GM13977 (cell line): ENCODE measurements at regions of chr3 and their contacts with region 1.

Region 1: DNA sequence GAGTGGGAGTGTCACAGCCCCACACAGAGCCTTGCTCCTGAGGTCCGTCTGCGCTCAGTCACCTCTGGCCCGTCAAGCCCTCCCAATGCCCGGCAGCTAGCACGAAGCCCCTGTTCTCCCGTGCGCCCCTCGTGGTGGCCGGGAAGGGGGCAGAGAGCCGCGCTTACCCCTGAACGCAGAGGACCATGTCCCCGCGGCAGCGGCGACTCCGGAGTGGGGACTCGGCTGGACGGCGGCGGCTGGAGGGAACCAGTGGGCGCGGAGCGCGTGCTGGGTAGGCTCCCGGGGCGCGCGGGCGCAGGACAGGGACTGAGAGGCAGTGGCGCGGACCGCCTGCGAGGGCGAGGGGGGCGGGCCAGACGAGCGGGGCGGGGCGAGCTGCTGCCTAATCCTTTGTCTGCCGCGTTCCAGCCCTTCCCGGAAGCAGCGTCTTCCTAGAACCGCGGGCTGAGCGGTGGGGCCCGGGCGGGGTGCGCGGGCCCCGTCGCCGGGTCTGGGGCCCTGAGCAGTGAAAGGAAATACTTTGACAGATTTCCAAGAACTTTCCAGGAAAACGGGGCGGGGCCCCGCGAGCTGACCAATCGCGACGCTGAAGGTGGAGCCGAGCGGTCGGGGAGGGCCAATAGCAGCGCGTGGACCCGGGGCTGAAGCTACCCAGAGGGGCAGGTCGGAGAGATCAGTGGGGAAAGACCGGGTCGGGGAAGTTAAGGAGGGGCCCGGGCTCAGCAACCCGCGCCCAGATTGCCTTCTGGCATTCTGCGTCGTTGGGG is at the start of gene CISH:
- DNase-seq: peak; percentile 93
- CTCF ChIP-seq: peak; percentile 50

Region 2: GRCh38 chr3:50575372-50575771 is 36.3 kb before region 1 on chr3:
- in situ Hi-C with region 1: loop called (anchors 5 kb)
- DNase-seq: no peak
- CTCF ChIP-seq: no peak

Region 3: GRCh38 chr3:51682079-51682478 is 1070.4 kb after region 1 on chr3:
- in situ Hi-C with region 1: loop called (anchors 25 kb)
- DNase-seq: peak; percentile 91
- CTCF ChIP-seq: peak; percentile 83